ENCODE measurements at regions of chr16 and their contacts with region 1.

Region 1: GRCh38 chr16:11407047-11407982 is 62.1 kb downstream of the RMI2 start:
- DNase-seq: peak in 1 of 2 experiments; percentile 88
- H3K4me3 ChIP-seq: no peak overlapping the region
- H3K27ac ChIP-seq: no peak overlapping the region
- H3K4me1 ChIP-seq: no peaks in the 10 kb centered on the region; a peak in 2 of 7 replicates
- H3K27me3 ChIP-seq: no peaks in the 10 kb centered on the region
- CTCF ChIP-seq: peak; percentile 39 to 83 (median 73)
- EP300 ChIP-seq: no peak
- POLR2A ChIP-seq: no peak
- RAD21 ChIP-seq: peak; percentile 80 to 86

Region 2: DNA sequence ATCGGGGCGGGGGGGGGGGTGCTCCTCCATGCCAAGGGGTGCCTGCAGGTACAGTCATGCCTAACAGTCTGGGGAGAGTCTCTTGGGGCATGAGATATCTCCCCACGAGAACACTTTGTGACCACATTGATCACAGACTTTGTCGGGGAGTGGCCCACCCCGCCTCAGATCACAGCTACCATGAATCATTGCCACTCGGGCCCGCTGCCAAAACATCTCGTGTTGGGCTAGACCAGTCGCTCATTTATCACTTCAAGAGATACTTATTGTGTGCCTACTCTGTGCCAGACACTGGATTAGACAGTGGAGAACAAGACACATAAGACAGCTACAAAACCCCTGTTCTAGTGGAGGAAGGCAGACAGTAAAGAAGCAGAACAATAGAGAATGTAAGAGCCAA is 390.3 kb before region 1 on chr16:
- CTCF ChIA-PET with region 1: no interaction called
- POLR2A ChIA-PET with region 1: no interaction called
- DNase-seq: no peak
- H3K4me3 ChIP-seq: no peak overlapping the region
- H3K27ac ChIP-seq: no peak overlapping the region
- H3K4me1 ChIP-seq: peaks cover 0 to 2% (median 0%) of the 10 kb centered on the region in 4 experiments; a peak in 1 of 7 replicates
- H3K27me3 ChIP-seq: no peaks in the 10 kb centered on the region
- CTCF ChIP-seq: no peak
- EP300 ChIP-seq: no peak
- POLR2A ChIP-seq: no peak
- RAD21 ChIP-seq: no peak

Region 3: GRCh38 chr16:11114366-11115164 is 292.8 kb before region 1 on chr16:
- CTCF ChIA-PET with region 1: no interaction called
- POLR2A ChIA-PET with region 1: no interaction called
- DNase-seq: no peak
- H3K4me3 ChIP-seq: no peak overlapping the region
- H3K27ac ChIP-seq: no peak overlapping the region
- H3K4me1 ChIP-seq: peaks cover 0 to 6% (median 0%) of the 10 kb centered on the region in 4 experiments; a peak in 3 of 7 replicates
- H3K27me3 ChIP-seq: no peaks in the 10 kb centered on the region
- CTCF ChIP-seq: no peak
- EP300 ChIP-seq: no peak
- POLR2A ChIP-seq: no peak
- RAD21 ChIP-seq: no peak

Region 4: DNA sequence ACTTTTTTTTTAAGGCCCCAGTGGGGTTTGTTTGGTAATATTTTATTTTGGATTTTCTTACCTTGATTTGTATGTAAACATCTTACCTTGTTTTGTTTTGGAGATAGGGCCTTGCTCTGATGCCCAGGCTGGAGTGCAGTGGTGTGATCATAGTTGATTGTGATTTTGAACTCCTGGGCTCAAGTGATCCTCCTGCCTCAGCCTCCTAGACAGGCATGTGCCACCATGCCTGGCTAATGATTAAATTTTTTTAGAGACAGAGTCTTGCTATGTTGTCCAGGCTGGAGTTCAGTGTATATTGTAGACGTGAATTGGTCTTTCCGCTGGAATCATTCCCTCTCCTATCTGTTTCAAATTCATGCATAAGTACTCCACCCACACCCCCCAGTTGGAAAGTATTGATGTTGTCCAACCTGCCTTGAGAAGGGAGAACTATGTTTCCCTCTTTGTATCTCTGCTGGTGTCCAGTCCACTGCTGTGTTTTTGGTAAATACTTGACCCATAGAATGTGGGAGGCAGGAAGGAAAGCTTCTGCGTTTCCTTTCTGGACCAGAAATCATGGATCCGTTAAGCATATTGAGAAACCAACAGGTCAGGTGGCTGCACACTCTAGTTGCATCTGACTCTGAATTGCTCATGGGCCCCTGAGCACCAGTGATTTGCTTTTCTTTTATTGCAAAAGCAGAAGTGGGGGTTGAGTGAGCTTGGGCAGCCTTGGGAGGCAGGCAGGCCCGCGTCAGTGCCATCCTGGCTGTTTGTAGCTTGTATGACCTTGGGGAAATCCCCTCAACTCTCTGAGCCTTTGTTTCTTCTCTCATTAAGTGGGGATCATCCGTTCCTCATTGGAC is 37.0 kb before region 1 on chr16:
- CTCF ChIA-PET with region 1: interaction called, 13 read pairs
- POLR2A ChIA-PET with region 1: no interaction called
- DNase-seq: no peak
- H3K4me3 ChIP-seq: no peak overlapping the region
- H3K27ac ChIP-seq: no peak overlapping the region
- H3K4me1 ChIP-seq: no peaks in the 10 kb centered on the region; a peak in 3 of 7 replicates
- H3K27me3 ChIP-seq: no peaks in the 10 kb centered on the region
- CTCF ChIP-seq: no peak
- EP300 ChIP-seq: no peak
- POLR2A ChIP-seq: no peak
- RAD21 ChIP-seq: no peak

Region 5: GRCh38 chr16:11396241-11397048 is 10.9 kb before region 1 on chr16:
- CTCF ChIA-PET with region 1: interaction called, 266 read pairs
- POLR2A ChIA-PET with region 1: no interaction called
- DNase-seq: peak; percentile 60 to 98
- H3K4me3 ChIP-seq: no peak overlapping the region
- H3K27ac ChIP-seq: no peak overlapping the region
- H3K4me1 ChIP-seq: peaks cover 0 to 12% (median 7%) of the 10 kb centered on the region in 4 experiments; a peak in 4 of 7 replicates
- H3K27me3 ChIP-seq: no peaks in the 10 kb centered on the region
- CTCF ChIP-seq: peak; percentile 96 to 97 (median 97)
- EP300 ChIP-seq: no peak
- POLR2A ChIP-seq: no peak
- RAD21 ChIP-seq: peak; percentile 99 to 100

Region 6: DNA sequence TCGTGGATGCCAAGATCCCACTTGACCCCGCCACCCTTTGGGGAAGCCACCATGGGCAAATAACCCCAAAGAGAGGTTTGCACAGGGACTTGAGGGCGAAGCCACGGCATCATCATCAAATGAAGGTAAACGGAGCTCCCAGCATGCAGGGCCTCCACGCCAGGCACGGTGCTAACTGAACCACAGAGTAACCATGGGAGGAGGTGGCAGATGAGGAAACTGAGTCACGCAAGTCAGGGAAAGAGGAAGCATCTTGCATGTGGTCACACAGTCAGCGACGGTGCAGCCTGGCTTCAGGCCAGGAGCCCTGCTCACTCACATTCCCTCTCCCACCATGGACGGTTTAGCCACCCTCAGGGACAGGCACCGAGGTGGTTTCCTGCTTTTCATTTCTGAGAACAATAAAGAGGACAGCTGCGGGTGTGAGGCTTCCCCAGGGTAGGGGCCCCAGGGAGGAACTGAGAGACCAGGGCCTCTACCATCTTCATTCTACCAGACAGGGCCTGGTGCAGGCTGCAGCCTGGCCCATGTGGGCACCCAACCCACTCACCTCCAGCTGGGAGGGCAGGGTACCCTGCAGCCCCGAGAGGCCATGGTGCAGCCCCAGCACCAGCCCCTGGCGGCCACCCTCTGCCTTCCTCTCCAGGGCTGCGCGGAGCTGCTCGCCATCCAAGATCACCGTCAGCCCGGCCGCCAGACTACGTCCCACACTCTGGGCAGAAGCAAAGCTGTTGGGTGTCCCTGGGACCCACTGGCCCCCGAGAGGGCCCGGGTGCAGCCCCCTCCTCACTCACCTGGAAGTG is 16.2 kb after region 1 on chr16:
- CTCF ChIA-PET with region 1: interaction called, 20 read pairs
- POLR2A ChIA-PET with region 1: no interaction called
- DNase-seq: no peak
- H3K4me3 ChIP-seq: no peak overlapping the region
- H3K27ac ChIP-seq: no peak overlapping the region
- H3K4me1 ChIP-seq: no peaks in the 10 kb centered on the region; a peak in 1 of 7 replicates
- H3K27me3 ChIP-seq: no peaks in the 10 kb centered on the region
- CTCF ChIP-seq: no peak
- EP300 ChIP-seq: no peak
- POLR2A ChIP-seq: no peak
- RAD21 ChIP-seq: no peak

Region 7: GRCh38 chr16:11474617-11475291 is 67.4 kb after region 1 on chr16:
- CTCF ChIA-PET with region 1: interaction called, 30 read pairs
- POLR2A ChIA-PET with region 1: no interaction called
- DNase-seq: no peak
- H3K4me3 ChIP-seq: no peak overlapping the region
- H3K27ac ChIP-seq: no peak overlapping the region
- H3K4me1 ChIP-seq: no peaks in the 10 kb centered on the region
- H3K27me3 ChIP-seq: no peaks in the 10 kb centered on the region
- CTCF ChIP-seq: no peak
- EP300 ChIP-seq: no peak
- POLR2A ChIP-seq: no peak
- RAD21 ChIP-seq: no peak

Region 8: GRCh38 chr16:11535471-11535870 is 128.2 kb after region 1 on chr16:
- CTCF ChIA-PET with region 1: interaction called, 10 read pairs
- POLR2A ChIA-PET with region 1: no interaction called
- DNase-seq: no peak
- H3K4me3 ChIP-seq: no peak overlapping the region
- H3K27ac ChIP-seq: no peak overlapping the region
- H3K4me1 ChIP-seq: peaks cover 0 to 3% (median 0%) of the 10 kb centered on the region in 4 experiments; a peak in 4 of 7 replicates
- H3K27me3 ChIP-seq: no peaks in the 10 kb centered on the region
- CTCF ChIP-seq: no peak
- EP300 ChIP-seq: no peak
- POLR2A ChIP-seq: no peak
- RAD21 ChIP-seq: no peak

Region 9: DNA sequence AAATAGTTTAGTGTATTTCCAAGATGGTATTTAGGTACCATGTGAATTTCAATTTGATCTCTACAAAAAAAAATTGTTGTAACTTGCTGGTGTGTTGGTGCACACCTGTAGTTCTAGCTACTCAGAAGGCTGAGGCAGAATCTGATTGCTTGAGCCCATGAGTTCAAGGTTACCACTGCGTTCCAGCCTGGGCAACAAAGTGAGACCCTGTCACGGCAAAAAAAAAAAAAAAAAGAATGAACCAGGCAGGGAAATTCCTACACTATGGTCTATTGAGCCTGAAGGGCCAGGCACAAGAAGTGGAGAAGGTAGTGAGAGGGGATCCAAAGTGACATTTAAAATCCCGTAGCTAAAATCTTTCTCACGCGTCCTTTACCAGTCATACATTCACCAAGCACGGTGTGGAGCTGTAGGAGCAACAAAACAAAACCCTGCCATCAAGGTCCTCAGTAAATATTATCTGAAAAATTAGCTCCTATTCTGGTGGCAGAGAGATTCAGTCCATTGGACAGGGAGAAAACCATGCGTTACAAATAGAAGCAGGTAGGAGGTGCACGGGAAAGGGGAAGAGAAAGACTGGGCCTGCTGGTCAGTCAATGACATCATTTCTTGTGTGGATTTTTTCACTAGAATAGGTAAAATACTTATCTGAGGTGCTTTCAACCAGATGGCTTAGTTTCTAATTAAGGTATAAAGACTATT is 308.1 kb after region 1 on chr16:
- CTCF ChIA-PET with region 1: interaction called, 50 read pairs
- POLR2A ChIA-PET with region 1: no interaction called
- DNase-seq: no peak
- H3K4me3 ChIP-seq: no peak overlapping the region
- H3K27ac ChIP-seq: no peak overlapping the region
- H3K4me1 ChIP-seq: no peaks in the 10 kb centered on the region
- H3K27me3 ChIP-seq: no peaks in the 10 kb centered on the region
- CTCF ChIP-seq: no peak
- EP300 ChIP-seq: no peak
- POLR2A ChIP-seq: no peak
- RAD21 ChIP-seq: no peak

Measured in H1 (cell line).